CD8-positive, alpha-beta memory T cell (primary cell): ENCODE measurements at regions of chr15 and their contacts with region 1.

Region 1: GRCh38 chr15:56886932-56887781 is 31.3 kb upstream of the TCF12 start:
- DNase-seq: peak; percentile 65 to 85 (median 82)
- H3K4me3 ChIP-seq: peak overlapping the region; percentile 83
- H3K4me3 Mint-ChIP-seq: peak overlapping the region; percentile 86 to 95 (median 90)
- H3K27ac ChIP-seq: peak overlapping the region; percentile 83
- H3K27ac Mint-ChIP-seq: peak overlapping the region; percentile 91 to 98 (median 94)
- H3K4me1 ChIP-seq: peaks cover 10% of the 10 kb centered on the region
- H3K4me1 Mint-ChIP-seq: peaks cover 28 to 33% (median 28%) of the 10 kb centered on the region in 3 donors
- H3K27me3 ChIP-seq: no peaks in the 10 kb centered on the region
- H3K27me3 Mint-ChIP-seq: peaks cover 0 to 4% of the 10 kb centered on the region in 2 donors

Region 2: GRCh38 chr15:56918046-56918938 is 31.1 kb after region 1 on chr15 and contains the start of gene TCF12:
- CTCF ChIA-PET with region 1: interaction called, 9 read pairs
- POLR2A ChIA-PET with region 1: interaction called, 23 read pairs
- DNase-seq: peak; percentile 77 to 93 (median 91)
- H3K4me3 ChIP-seq: peak within 1 kb of the TSS; percentile 87
- H3K4me3 Mint-ChIP-seq: peak within 1 kb of the TSS; percentile 86 to 95 (median 90)
- H3K27ac ChIP-seq: peak within 1 kb of the TSS; percentile 75
- H3K27ac Mint-ChIP-seq: peak within 1 kb of the TSS; percentile 80 to 92 (median 88)
- H3K4me1 ChIP-seq: peaks cover 30% of the 10 kb centered on the region
- H3K4me1 Mint-ChIP-seq: peaks cover 39 to 61% (median 48%) of the 10 kb centered on the region in 3 donors
- H3K27me3 ChIP-seq: no peaks in the 10 kb centered on the region
- H3K27me3 Mint-ChIP-seq: no peaks in the 10 kb centered on the region
- total RNA-seq, gene TCF12: 69.9 to 79.2 TPM

Region 3: DNA sequence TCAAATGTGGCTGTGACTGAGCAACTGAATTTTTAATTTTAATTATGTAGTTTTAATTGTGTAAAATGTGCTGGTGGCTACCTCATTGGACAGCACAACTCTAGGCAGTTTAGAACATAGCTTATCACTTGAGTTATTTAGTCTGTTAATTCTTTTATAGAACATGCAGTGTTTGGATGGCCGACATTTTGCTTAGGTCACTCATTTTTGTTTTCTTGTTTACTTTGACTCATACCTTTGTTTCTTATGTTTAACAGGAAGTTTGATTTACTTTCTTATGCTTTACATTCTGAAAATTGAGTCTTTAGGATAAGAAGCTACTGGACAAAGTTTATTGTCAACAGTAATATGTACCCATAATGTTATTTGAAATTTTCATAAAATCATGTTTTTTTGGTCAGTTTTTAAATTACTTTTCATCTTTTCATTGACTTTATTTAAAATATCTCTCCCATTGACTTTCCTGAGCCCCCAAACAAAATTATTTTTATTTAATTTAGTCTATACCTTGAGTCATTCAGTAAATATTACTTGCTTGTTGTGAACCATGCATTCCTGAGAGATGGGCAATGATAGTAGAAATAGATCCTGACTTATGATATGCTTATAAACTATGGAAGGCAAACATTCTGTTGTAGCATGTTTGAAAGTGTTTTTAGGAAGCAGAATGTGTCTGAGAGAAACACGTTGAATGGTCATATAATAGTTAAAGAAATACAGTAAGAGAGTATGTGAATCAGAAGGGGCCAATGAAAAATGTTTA is 91.9 kb after region 1 on chr15:
- CTCF ChIA-PET with region 1: no interaction called
- POLR2A ChIA-PET with region 1: no interaction called
- DNase-seq: no peak
- H3K4me3 ChIP-seq: no peak overlapping the region
- H3K4me3 Mint-ChIP-seq: no peak overlapping the region
- H3K27ac ChIP-seq: no peak overlapping the region
- H3K27ac Mint-ChIP-seq: no peak overlapping the region
- H3K4me1 ChIP-seq: peaks cover 28% of the 10 kb centered on the region
- H3K4me1 Mint-ChIP-seq: peaks cover 48 to 71% (median 64%) of the 10 kb centered on the region in 3 donors
- H3K27me3 ChIP-seq: no peaks in the 10 kb centered on the region
- H3K27me3 Mint-ChIP-seq: no peaks in the 10 kb centered on the region